ENCODE measurements at regions of chr1 and their contacts with region 1.

Region 1: GRCh38 chr1:214123061-214123784 is 135.4 kb downstream of the PROX1 start:
- DNase-seq: peak; percentile 51
- ATAC-seq: peak; percentile 97
- H3K4me3 ChIP-seq: no peak overlapping the region
- H3K27ac ChIP-seq: no peak overlapping the region
- H3K4me1 ChIP-seq: no peaks in the 10 kb centered on the region; a peak in 1 of 4 replicates
- H3K27me3 ChIP-seq: no peaks in the 10 kb centered on the region
- CTCF ChIP-seq: peak; percentile 60 to 63 (median 62); a peak in 5 of 6 replicates
- POLR2A ChIP-seq: no peak
- RAD21 ChIP-seq: peak; percentile 97

Region 2: DNA sequence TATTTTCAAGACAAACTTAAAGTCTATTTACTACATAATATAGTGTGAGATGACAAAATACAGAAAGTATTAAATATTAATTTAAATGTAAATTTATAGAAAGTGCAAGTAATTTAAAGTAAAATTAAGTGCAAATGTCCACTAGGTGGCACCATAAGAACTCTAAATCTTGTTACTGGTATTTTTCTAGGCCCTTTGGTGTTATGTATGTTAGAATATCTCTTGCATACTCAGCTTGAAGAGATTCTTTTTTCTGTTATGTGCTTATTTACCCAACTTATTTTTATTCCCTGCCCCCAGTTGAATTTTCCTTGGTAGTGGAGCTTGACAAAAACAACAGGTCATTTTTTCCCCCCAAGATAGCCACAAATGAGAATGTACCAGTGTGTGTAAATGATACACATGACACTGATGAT is 1000.7 kb before region 1 on chr1:
- CTCF ChIA-PET with region 1: interaction called, 13 read pairs
- POLR2A ChIA-PET with region 1: no interaction called
- RAD21 ChIA-PET with region 1: no interaction called
- intact Hi-C with region 1: loop called (anchors 1 kb)
- DNase-seq: peak; percentile 55
- ATAC-seq: no peak
- H3K4me3 ChIP-seq: no peak overlapping the region
- H3K27ac ChIP-seq: peak overlapping the region; percentile 70; the same call in 1 of the 2 replicates
- H3K4me1 ChIP-seq: peaks cover 66 to 69% of the 10 kb centered on the region in 2 experiments
- H3K27me3 ChIP-seq: no peaks in the 10 kb centered on the region
- CTCF ChIP-seq: peak; percentile 36 to 48 (median 36); a peak in 3 of 6 replicates
- POLR2A ChIP-seq: no peak
- RAD21 ChIP-seq: peak; percentile 71

Region 3: DNA sequence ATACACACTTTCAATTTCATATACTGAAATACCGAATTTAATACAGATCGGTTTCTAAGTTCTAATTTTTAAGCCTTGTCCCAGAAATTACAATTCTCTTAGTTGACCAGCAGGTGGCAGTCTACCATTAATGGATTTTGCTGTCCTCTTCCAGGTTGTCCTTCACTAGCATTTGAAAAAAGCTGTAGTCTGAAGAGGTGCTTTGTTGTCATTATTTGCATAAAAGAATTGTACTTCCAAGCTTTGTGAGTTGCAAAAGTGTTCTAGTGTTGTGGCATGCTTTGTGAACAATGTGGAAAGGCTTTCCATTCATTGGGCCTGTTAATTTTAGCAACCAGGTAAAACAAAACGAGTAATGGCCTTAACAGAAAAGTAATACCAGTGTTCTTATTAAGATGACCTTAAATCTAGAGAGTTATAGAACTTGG is 878.5 kb before region 1 on chr1:
- CTCF ChIA-PET with region 1: interaction called, 6 read pairs
- POLR2A ChIA-PET with region 1: no interaction called
- RAD21 ChIA-PET with region 1: no interaction called
- intact Hi-C with region 1: loop called (anchors 5 kb)
- DNase-seq: peak; percentile 13
- ATAC-seq: no peak
- H3K4me3 ChIP-seq: no peak overlapping the region
- H3K27ac ChIP-seq: no peak overlapping the region
- H3K4me1 ChIP-seq: no peaks in the 10 kb centered on the region
- H3K27me3 ChIP-seq: no peaks in the 10 kb centered on the region
- CTCF ChIP-seq: peak; percentile 54 to 82 (median 62); a peak in 5 of 6 replicates
- POLR2A ChIP-seq: no peak
- RAD21 ChIP-seq: peak; percentile 77

Region 4: GRCh38 chr1:213374369-213374768 is 748.9 kb before region 1 on chr1:
- CTCF ChIA-PET with region 1: interaction called, 5 read pairs
- POLR2A ChIA-PET with region 1: no interaction called
- RAD21 ChIA-PET with region 1: no interaction called
- intact Hi-C with region 1: loop called (anchors 1 kb)
- DNase-seq: peak; percentile 40
- ATAC-seq: peak; percentile 88
- H3K4me3 ChIP-seq: no peak overlapping the region
- H3K27ac ChIP-seq: no peak overlapping the region
- H3K4me1 ChIP-seq: no peaks in the 10 kb centered on the region
- H3K27me3 ChIP-seq: no peaks in the 10 kb centered on the region
- CTCF ChIP-seq: peak; percentile 62 to 98 (median 94); a peak in 5 of 6 replicates
- POLR2A ChIP-seq: no peak
- RAD21 ChIP-seq: peak; percentile 83

Region 5: DNA sequence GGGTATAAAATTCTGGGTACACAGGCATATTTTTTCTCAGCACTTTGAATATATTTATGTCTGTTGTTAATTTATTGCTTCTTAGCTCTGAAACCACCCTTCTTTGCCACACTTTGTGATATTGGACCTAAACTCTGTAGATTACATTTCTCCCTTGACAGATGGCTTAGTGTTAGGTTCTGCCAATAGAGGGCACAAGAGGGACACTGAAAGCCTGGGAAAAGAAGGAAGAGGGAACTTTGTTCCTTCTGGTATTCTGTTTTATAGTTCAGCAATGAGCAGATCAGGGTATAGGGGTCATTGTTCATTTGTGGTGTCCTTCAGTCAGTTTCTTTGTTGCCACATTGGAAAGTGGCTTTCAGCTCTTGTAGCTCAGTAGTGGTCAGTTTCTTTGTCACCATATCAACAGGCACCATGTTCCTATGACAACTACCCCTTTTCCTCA is 559.0 kb before region 1 on chr1:
- CTCF ChIA-PET with region 1: no interaction called
- POLR2A ChIA-PET with region 1: no interaction called
- RAD21 ChIA-PET with region 1: no interaction called
- intact Hi-C with region 1: loop called (anchors 1 kb)
- DNase-seq: peak; percentile 12
- ATAC-seq: peak; percentile 53
- H3K4me3 ChIP-seq: no peak overlapping the region
- H3K27ac ChIP-seq: no peak overlapping the region
- H3K4me1 ChIP-seq: no peaks in the 10 kb centered on the region
- H3K27me3 ChIP-seq: no peaks in the 10 kb centered on the region
- CTCF ChIP-seq: peak; percentile 28 to 70 (median 64); a peak in 5 of 6 replicates
- POLR2A ChIP-seq: no peak
- RAD21 ChIP-seq: peak; percentile 61

Region 6: DNA sequence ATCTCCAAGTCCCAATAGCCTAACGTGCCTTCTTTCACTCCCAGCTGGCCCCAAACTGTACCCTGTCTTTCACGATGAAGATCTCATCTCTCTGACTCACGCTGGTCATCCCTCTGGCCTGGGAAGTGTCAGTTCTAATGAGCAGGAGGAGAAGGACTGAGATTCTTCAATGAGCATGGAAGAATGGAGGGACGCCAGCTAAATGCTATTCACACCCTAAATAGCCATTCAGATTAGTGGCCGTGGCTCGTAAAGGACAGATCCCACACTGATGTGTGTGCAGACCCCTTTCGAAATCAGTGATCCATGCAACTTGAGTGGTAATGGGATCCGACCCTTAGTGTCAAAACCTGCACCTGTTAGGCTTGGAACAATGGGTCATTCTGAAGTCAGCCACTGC is 81.8 kb after region 1 on chr1:
- CTCF ChIA-PET with region 1: no interaction called
- POLR2A ChIA-PET with region 1: no interaction called
- RAD21 ChIA-PET with region 1: no interaction called
- intact Hi-C with region 1: no loop called
- DNase-seq: no peak
- ATAC-seq: no peak
- H3K4me3 ChIP-seq: no peak overlapping the region
- H3K27ac ChIP-seq: no peak overlapping the region
- H3K4me1 ChIP-seq: no peaks in the 10 kb centered on the region
- H3K27me3 ChIP-seq: no peaks in the 10 kb centered on the region; the same call in 1 of the 2 replicates
- CTCF ChIP-seq: no peak
- POLR2A ChIP-seq: no peak
- RAD21 ChIP-seq: no peak

Region 7: GRCh38 chr1:214397497-214397896 is 274.3 kb after region 1 on chr1:
- CTCF ChIA-PET with region 1: no interaction called
- POLR2A ChIA-PET with region 1: no interaction called
- RAD21 ChIA-PET with region 1: no interaction called
- intact Hi-C with region 1: no loop called
- DNase-seq: no peak
- ATAC-seq: no peak
- H3K4me3 ChIP-seq: no peak overlapping the region
- H3K27ac ChIP-seq: no peak overlapping the region
- H3K4me1 ChIP-seq: no peaks in the 10 kb centered on the region
- H3K27me3 ChIP-seq: no peaks in the 10 kb centered on the region
- CTCF ChIP-seq: no peak
- POLR2A ChIP-seq: no peak
- RAD21 ChIP-seq: no peak

Measured in HCT116 (cell line).